Activated CD8-positive, alpha-beta memory T cell treated with anti-CD3 and anti-CD28 coated beads, Interleukin-2, amount 10 ng/mL, durations not matched to agents 7 days and 5 days (primary cell): ENCODE measurements at regions of chr1 and their contacts with region 1.

Region 1: DNA sequence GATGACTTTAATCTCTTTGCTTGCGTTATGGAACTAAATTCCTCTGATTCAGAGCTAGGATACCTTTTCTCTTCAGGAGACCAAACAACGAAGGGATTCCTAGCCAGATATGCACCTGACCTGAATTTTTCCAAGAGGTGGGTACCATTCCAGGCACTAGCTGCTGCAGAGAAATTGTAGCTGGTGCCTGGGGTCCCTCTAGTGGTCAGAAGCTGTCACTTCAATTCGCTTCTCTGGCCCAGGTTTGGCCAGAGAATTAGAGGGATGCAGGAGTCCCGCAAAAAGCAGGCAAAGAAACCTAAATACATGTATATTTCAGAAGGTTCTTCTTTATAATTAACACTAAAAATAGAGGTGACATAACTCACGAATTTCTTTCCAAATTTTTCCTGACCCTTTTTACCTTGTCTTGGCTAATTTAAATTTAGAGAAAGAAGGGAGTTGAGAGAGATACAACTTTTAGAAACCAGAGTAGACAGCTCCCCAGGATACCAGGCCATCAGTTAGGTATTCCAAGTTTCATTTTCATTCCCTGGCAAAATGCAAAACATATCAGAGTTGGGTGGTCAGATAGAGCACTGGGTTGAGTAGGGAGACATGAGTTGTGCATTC is 9.6 kb downstream of the ACKR1 start:
- DNase-seq: peak; percentile 48
- ATAC-seq: peak; percentile 47
- H3K4me3 Mint-ChIP-seq: no peak overlapping the region
- H3K27ac Mint-ChIP-seq: no peak overlapping the region
- H3K4me1 Mint-ChIP-seq: no peaks in the 10 kb centered on the region
- H3K27me3 Mint-ChIP-seq: peaks cover 42% of the 10 kb centered on the region

Region 2: DNA sequence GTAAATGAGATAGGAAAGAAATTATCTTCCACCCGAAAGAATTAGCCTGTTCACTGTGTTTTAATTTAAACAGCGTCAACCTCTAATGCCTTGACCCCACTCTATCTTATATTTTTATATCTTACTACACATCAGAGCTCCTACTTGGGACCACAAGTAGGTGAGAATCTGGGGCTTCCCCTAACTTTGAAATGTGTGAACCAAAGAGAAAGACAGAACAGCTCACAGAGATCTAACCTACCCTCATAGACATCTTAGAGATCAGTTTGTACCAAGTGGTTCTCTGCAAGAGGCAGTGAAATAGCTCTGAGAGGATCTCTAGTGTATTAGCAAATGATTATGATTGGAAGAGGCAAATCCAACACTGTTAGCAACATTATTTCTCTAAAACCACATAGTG is 235.5 kb before region 1 on chr1:
- CTCF ChIA-PET with region 1: no interaction called
- DNase-seq: no peak
- ATAC-seq: no peak
- H3K4me3 Mint-ChIP-seq: no peak overlapping the region
- H3K27ac Mint-ChIP-seq: no peak overlapping the region
- H3K4me1 Mint-ChIP-seq: peaks cover 9% of the 10 kb centered on the region
- H3K27me3 Mint-ChIP-seq: no peaks in the 10 kb centered on the region

Region 3: DNA sequence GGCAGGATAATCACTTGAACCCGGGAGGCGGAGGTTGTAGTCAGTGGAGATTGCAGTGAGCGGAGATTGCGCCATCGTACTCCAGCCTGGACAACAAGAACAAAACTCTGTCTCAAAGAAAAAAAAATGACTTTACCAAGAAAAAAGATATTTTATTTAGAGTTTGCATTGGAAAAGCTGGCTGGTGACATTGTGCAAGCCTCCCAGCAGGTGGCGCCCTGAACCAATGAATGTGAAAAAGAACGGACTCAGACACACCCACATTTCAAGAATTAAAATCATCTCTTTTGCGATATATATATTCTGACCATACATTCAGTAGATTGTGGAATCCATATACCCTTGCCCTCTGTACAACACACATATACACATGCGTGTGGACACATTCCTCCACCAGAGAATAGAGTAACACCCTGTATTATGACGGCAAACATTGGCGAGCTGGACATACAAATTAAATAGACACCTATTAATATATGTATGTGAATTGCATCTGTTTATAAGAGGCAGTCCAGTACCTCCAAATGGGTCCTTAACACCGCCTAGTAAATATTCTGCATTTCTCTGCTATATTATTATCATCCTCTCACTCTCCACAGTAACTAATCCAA is 81.9 kb before region 1 on chr1:
- CTCF ChIA-PET with region 1: interaction called, 99 read pairs
- DNase-seq: peak; percentile 73
- ATAC-seq: no peak
- H3K4me3 Mint-ChIP-seq: no peak overlapping the region
- H3K27ac Mint-ChIP-seq: no peak overlapping the region
- H3K4me1 Mint-ChIP-seq: no peaks in the 10 kb centered on the region
- H3K27me3 Mint-ChIP-seq: peaks cover 4% of the 10 kb centered on the region

Region 4: DNA sequence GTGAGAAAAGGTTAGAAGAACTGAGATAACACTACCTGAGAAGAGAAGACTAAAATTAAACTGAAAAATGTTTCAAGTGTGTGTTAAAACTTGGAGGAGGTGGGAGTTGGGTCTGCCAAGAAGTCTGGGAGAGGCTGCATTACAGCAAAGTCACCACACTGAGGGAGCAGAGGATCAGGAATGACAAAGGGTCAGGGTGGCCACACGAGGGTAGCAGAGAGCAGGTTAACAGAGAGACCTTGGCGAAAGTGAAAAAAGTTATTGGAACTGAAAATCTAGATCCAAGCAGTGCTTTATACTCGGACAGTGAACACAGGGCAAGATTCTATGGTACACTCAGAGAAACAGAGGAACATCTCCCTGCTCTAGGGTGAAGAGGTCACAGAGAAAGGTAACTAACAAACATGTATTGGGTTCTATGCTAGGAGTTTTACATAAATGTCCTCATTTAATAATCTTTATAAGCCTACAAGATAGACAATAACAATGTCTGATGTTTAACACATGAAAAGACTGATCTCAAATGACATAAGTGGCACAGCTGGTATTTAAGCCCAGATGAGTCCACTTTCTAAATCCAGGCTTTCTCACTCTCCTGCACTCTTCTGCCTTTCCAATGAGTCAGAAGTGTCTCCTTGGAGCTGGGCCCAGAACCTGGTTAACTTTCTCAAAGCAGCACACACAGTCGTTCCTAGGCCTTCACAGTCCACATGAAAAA is 53.1 kb before region 1 on chr1:
- CTCF ChIA-PET with region 1: interaction called, 30 read pairs
- DNase-seq: peak; percentile 67
- ATAC-seq: peak; percentile 67
- H3K4me3 Mint-ChIP-seq: no peak overlapping the region
- H3K27ac Mint-ChIP-seq: no peak overlapping the region
- H3K4me1 Mint-ChIP-seq: peaks cover 2% of the 10 kb centered on the region
- H3K27me3 Mint-ChIP-seq: peaks cover 57% of the 10 kb centered on the region

Region 5: GRCh38 chr1:159171688-159172501 is 42.4 kb before region 1 on chr1:
- CTCF ChIA-PET with region 1: no interaction called
- DNase-seq: no peak
- ATAC-seq: no peak
- H3K4me3 Mint-ChIP-seq: no peak overlapping the region
- H3K27ac Mint-ChIP-seq: no peak overlapping the region
- H3K4me1 Mint-ChIP-seq: peaks cover 1% of the 10 kb centered on the region
- H3K27me3 Mint-ChIP-seq: peaks cover 68% of the 10 kb centered on the region

Region 6: DNA sequence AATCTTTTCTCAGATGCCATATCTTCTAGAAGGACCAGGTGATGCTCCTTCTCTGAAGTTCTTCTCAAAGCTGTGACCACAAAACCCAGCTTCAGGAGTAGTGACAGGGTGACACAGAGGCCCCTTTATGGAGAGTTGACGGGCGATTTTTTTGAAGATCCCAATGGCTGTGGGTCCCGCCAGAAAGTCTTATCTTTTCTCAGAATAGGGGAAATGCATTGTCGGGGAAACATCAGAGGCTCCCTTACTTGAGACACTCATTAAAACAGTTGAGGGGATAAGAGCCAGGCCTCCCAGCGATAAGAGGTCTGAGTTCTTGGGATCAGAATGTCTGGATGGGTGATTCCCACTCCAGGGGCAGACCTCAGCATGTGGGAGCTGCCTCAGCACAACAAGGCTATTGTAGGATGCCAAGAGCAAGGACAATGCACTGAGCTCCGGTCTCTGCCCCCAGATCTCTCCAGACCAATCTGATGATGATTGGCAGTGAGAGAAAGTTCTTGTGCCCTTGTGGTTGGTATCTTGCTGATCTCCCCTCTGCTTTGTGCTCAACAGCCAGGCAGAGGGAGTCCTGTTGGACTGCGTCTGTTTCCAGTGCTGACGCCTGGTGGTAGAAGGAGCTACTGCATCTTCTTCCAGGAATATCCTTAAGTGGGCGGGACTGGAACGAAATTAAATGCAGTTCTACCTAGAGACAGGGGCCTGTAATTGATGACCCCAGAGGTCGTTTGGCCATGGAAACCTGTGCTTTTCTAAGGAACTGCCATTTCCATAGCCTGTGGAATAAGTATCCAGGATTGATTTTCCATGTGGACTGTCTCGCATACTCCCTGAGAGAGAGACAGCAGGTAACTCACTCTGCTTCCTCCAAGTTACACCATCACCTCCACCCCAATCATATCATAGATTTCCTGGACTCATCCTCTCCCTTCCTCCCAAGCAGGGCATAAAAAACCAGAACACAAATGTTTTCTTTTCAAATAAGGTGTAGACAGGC is 16.4 kb before region 1 on chr1:
- CTCF ChIA-PET with region 1: interaction called, 19 read pairs
- DNase-seq: peak; percentile 68
- ATAC-seq: peak; percentile 65
- H3K4me3 Mint-ChIP-seq: no peak overlapping the region
- H3K27ac Mint-ChIP-seq: no peak overlapping the region
- H3K4me1 Mint-ChIP-seq: peaks cover 3% of the 10 kb centered on the region
- H3K27me3 Mint-ChIP-seq: peaks cover 34% of the 10 kb centered on the region

Region 7: DNA sequence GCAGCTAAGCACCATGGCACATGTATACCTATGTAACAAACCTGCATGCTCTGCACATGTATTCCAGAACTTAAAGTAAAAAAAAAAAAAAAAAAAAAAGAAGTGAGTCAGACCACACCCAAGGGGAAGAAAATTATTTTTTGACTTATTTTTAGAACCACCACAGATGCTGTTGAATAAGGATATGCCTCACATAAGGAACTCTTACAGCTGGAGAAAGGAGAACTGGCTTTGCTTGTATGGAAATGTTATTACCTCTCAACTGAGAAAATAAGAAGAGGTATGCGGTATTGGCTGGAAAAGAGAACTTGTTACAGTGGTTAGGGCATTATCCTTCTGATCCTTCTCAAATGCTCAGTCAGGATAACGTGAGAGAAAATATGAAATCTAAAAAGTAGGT is 60.4 kb after region 1 on chr1:
- CTCF ChIA-PET with region 1: no interaction called
- DNase-seq: no peak
- ATAC-seq: no peak
- H3K4me3 Mint-ChIP-seq: no peak overlapping the region
- H3K27ac Mint-ChIP-seq: no peak overlapping the region
- H3K4me1 Mint-ChIP-seq: no peaks in the 10 kb centered on the region
- H3K27me3 Mint-ChIP-seq: peaks cover 6% of the 10 kb centered on the region

Region 8: DNA sequence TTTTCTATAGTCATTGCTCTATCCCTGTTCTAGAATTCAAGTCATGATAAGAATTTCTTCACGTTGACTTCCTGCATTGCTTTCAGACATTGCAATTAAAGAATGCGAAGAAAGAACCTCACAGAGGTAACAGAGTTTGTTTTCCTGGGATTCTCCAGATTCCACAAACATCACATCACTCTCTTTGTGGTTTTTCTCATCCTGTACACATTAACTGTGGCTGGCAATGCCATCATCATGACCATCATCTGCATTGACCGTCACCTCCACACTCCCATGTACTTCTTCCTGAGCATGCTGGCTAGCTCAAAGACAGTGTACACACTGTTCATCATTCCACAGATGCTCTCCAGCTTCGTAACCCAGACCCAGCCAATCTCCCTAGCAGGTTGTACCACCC is 383.9 kb after region 1 on chr1:
- CTCF ChIA-PET with region 1: no interaction called
- DNase-seq: no peak
- ATAC-seq: no peak
- H3K4me3 Mint-ChIP-seq: no peak overlapping the region
- H3K27ac Mint-ChIP-seq: no peak overlapping the region
- H3K4me1 Mint-ChIP-seq: no peaks in the 10 kb centered on the region
- H3K27me3 Mint-ChIP-seq: peaks cover 9% of the 10 kb centered on the region